Activated CD8-positive, alpha-beta T cell treated with anti-CD3 and anti-CD28 coated beads for 36 hours (primary cell): ENCODE measurements at regions of chr17 and their contacts with region 1.

Region 1: GRCh38 chr17:64129764-64130558 is at the start of gene ERN1:
- DNase-seq: peak; percentile 92
- ATAC-seq: peak; percentile 89
- H3K4me3 Mint-ChIP-seq: peak within 1 kb of the TSS; percentile 93
- H3K27ac Mint-ChIP-seq: peak within 1 kb of the TSS; percentile 97
- H3K4me1 Mint-ChIP-seq: peaks cover 40% of the 10 kb centered on the region
- H3K27me3 Mint-ChIP-seq: no peaks in the 10 kb centered on the region
- CTCF ChIP-seq: no peak
- total RNA-seq, gene ERN1: 19.2 to 23.6 TPM

Region 2: GRCh38 chr17:63904316-63904715 is 225.6 kb before region 1 on chr17:
- CTCF ChIA-PET with region 1: interaction called, 17 read pairs
- POLR2A ChIA-PET with region 1: no interaction called
- intact Hi-C with region 1: no loop called
- DNase-seq: no peak
- ATAC-seq: no peak
- H3K4me3 Mint-ChIP-seq: no peak overlapping the region
- H3K27ac Mint-ChIP-seq: no peak overlapping the region
- H3K4me1 Mint-ChIP-seq: peaks cover 8% of the 10 kb centered on the region
- H3K27me3 Mint-ChIP-seq: peaks cover 3% of the 10 kb centered on the region
- CTCF ChIP-seq: no peak

Region 3: GRCh38 chr17:63931099-63931561 is 198.8 kb before region 1 on chr17:
- CTCF ChIA-PET with region 1: interaction called, 10 read pairs
- POLR2A ChIA-PET with region 1: no interaction called
- intact Hi-C with region 1: no loop called
- DNase-seq: peak; percentile 80
- ATAC-seq: peak; percentile 71
- H3K4me3 Mint-ChIP-seq: peak overlapping the region; percentile 96
- H3K27ac Mint-ChIP-seq: peak overlapping the region; percentile 91
- H3K4me1 Mint-ChIP-seq: peaks cover 15% of the 10 kb centered on the region
- H3K27me3 Mint-ChIP-seq: no peaks in the 10 kb centered on the region
- CTCF ChIP-seq: no peak

Region 4: GRCh38 chr17:64020056-64020766 is 109.8 kb before region 1 on chr17 and contains the start of gene ICAM2:
- CTCF ChIA-PET with region 1: interaction called, 419 read pairs
- POLR2A ChIA-PET with region 1: interaction called, 13 read pairs
- intact Hi-C with region 1: no loop called
- DNase-seq: peak; percentile 96
- ATAC-seq: peak; percentile 72
- H3K4me3 Mint-ChIP-seq: peak within 1 kb of the TSS; percentile 94
- H3K27ac Mint-ChIP-seq: peak within 1 kb of the TSS; percentile 98
- H3K4me1 Mint-ChIP-seq: peaks cover 66% of the 10 kb centered on the region
- H3K27me3 Mint-ChIP-seq: no peaks in the 10 kb centered on the region
- CTCF ChIP-seq: no peak
- total RNA-seq, gene ICAM2: 53.3 to 53.7 TPM

Region 5: GRCh38 chr17:64051153-64051552 is 78.8 kb before region 1 on chr17:
- CTCF ChIA-PET with region 1: interaction called, 35 read pairs
- POLR2A ChIA-PET with region 1: interaction called, 6 read pairs
- intact Hi-C with region 1: no loop called
- DNase-seq: no peak
- ATAC-seq: peak; percentile 95
- H3K4me3 Mint-ChIP-seq: no peak overlapping the region
- H3K27ac Mint-ChIP-seq: peak overlapping the region; percentile 81
- H3K4me1 Mint-ChIP-seq: peaks cover 29% of the 10 kb centered on the region
- H3K27me3 Mint-ChIP-seq: no peaks in the 10 kb centered on the region
- CTCF ChIP-seq: no peak

Region 6: GRCh38 chr17:64073771-64074703 is 55.9 kb before region 1 on chr17:
- CTCF ChIA-PET with region 1: interaction called, 228 read pairs
- POLR2A ChIA-PET with region 1: no interaction called
- intact Hi-C with region 1: no loop called
- DNase-seq: no peak
- ATAC-seq: no peak
- H3K4me3 Mint-ChIP-seq: no peak overlapping the region
- H3K27ac Mint-ChIP-seq: no peak overlapping the region
- H3K4me1 Mint-ChIP-seq: peaks cover 14% of the 10 kb centered on the region
- H3K27me3 Mint-ChIP-seq: no peaks in the 10 kb centered on the region
- CTCF ChIP-seq: no peak

Region 7: DNA sequence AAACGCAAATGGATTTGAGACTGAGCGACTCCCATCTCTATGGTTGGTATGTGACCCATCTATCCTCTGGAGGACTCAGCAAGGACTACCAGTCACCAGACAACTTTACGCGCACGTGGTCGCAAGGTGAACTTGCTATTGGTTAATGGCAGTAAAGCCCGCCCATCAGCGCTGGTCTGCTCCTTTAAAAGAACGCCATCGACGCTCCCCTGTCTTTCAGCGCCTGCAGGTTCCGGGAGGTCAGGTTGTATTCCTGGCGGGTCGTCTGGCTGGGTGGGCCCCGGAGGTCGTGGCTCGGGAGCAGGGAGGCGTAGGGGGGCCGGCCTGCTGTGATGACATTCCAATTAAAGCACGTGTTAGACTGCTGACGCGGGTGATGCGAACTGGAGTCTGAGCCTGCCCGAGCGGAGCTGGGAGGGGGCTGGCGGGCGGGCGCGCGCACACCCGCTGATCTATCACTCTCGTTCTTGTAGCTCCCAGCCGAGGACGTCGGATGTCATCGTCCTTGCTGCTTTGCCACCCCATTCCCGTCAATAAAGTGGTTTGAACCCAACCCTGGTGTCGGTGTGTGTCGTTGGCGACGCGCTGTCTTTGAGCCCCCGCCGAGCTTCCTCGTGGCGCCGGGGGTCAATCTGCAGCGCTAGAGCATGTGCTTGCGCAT is 15.9 kb after region 1 on chr17:
- CTCF ChIA-PET with region 1: interaction called, 50 read pairs
- POLR2A ChIA-PET with region 1: interaction called, 83 read pairs
- intact Hi-C with region 1: no loop called
- DNase-seq: peak; percentile 98
- ATAC-seq: peak; percentile 96
- H3K4me3 Mint-ChIP-seq: no peak overlapping the region
- H3K27ac Mint-ChIP-seq: no peak overlapping the region
- H3K4me1 Mint-ChIP-seq: peaks cover 18% of the 10 kb centered on the region
- H3K27me3 Mint-ChIP-seq: no peaks in the 10 kb centered on the region
- CTCF ChIP-seq: no peak